ENCODE measurements at regions of chr18 and their contacts with region 1.

Region 1: DNA sequence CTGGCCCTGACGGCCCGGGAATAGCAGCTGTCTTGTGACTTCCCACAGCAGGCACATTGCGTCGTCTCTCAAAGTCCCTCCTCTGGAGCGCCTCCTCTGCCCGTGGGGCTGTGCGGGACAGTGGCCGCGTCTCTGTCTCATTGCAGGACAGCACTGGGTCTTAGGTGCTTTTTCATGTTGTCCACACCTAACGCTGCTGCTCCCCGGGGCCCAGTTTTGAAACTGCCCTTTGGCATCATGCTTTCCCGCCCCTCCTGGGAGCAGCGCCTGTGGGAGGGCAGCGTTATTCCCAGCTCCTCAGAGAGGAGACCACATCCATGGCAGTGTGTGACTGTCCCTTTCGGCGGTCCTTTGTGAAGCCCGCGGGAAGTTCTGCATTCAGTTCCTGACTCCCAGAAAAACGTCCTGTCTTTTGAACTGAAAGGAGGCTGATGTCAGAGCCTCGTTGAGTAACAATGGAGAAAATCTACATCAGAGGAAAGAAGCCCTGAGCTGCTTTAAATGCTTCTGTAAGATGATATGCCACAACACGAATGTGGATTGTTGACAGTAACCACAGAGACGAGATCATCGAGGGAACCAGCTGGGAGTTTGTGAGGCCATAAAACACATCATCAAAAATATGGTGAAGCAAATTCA is 226.0 kb downstream of the FAM210A start:
- DNase-seq: peak in 1 of 2 donors; percentile 79
- H3K4me3 ChIP-seq: peak overlapping the region in 1 of 2 donors; percentile 48
- H3K27ac ChIP-seq: peak overlapping the region; percentile 90 to 91
- H3K4me1 ChIP-seq: peaks cover 8 to 45% of the 10 kb centered on the region in 2 donors
- H3K27me3 ChIP-seq: no peaks in the 10 kb centered on the region
- CTCF ChIP-seq: no peak

Region 2: DNA sequence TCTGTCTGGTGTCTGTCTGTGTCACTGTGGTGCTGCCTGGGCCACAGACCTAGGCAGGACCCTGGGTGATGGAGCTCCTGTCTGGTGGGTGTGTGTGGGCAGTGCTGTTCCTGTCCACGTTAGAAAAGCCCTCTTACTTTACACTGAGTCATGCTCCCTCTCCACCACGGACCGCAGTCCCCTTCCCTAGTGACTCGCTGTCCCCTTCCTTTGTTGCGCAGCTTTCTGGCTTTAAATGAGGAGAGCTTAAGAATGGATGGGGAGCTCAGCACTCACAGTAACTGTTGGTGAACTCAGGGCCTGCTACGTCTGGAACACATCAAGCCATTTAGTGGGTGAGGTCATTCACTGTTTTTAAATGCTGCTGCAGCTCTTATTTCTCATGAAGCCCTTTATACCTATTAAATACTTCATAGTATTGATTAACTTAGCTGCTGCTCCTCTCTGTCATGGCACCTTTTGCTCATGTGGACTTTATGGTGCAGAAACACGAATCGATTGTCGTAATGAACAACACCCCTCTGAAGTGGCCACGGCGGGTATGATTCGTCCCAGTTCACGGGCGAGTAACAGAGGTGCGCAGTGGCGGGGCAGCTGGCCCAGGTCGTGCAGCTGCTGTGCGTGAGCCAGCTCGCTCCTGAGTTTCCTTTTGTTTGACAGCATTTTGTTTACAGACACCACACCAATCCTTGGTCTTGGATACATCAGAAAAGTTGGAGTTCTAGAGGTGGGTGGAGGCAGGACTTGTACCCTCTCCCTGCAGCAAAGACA is 181.4 kb before region 1 on chr18:
- intact Hi-C with region 1: loop called (anchors 5 kb)
- DNase-seq: no peak
- H3K4me3 ChIP-seq: peak overlapping the region in 1 of 2 donors; percentile 1
- H3K27ac ChIP-seq: peak overlapping the region; percentile 83 to 85
- H3K4me1 ChIP-seq: peaks cover 0 to 29% of the 10 kb centered on the region in 2 donors
- H3K27me3 ChIP-seq: no peaks in the 10 kb centered on the region
- CTCF ChIP-seq: no peak

Region 3: DNA sequence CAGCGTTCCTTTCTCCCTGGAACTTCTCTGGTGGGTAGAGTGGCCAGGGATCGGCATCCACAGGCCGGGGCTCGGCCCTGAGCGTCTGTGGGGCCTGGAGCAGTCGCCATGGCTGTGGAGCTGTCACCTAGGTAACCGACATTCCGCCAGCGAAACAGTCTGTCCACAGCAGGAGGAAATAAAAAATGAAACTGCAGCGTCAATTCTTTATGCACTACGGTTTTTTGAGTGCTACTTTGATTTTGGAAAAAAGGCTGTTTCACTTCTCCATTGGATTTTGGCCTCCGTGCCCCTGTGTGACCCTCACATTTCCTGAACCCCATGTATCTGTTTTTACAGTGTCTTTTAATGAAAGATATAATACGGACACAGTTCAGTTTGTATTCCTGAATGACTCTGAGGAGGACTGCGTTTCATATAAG is 118.4 kb before region 1 on chr18:
- intact Hi-C with region 1: loop called (anchors 2 kb)
- DNase-seq: peak; percentile 38 to 91
- H3K4me3 ChIP-seq: peak overlapping the region; percentile 35 to 55
- H3K27ac ChIP-seq: peak overlapping the region; percentile 95 to 96
- H3K4me1 ChIP-seq: peaks cover 15 to 52% of the 10 kb centered on the region in 2 donors
- H3K27me3 ChIP-seq: no peaks in the 10 kb centered on the region
- CTCF ChIP-seq: no peak

Region 4: DNA sequence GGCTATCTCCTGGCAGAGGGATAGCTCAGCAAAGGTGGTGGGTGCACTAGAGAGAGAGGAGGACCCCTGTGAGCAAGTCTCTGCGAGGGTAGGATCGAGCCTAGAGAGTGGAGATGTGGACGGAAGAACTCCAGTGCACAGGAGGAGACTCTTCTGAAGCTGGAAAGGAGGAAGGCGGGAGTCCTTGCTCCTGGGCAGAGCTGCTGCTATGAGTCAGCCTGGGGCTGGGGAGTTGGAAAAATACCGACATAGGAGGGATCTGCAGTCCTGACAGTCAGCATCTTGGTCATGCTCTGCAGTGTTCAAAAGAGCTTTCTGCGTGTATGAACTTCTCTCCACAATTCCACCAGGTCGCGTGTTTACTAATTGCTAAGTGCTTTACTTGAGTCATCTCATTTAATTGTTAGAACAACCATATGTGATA is 47.9 kb before region 1 on chr18:
- intact Hi-C with region 1: loop called (anchors 2 kb)
- DNase-seq: peak; percentile 62 to 92
- H3K4me3 ChIP-seq: peak overlapping the region in 1 of 2 donors; percentile 4
- H3K27ac ChIP-seq: peak overlapping the region; percentile 74 to 75
- H3K4me1 ChIP-seq: peaks cover 17 to 23% of the 10 kb centered on the region in 2 donors
- H3K27me3 ChIP-seq: no peaks in the 10 kb centered on the region
- CTCF ChIP-seq: no peak

Region 5: GRCh38 chr18:13558124-13558523 is 57.8 kb after region 1 on chr18:
- intact Hi-C with region 1: no loop called
- DNase-seq: no peak
- H3K4me3 ChIP-seq: no peak overlapping the region
- H3K27ac ChIP-seq: no peak overlapping the region
- H3K4me1 ChIP-seq: peaks cover 2 to 8% of the 10 kb centered on the region in 2 donors
- H3K27me3 ChIP-seq: no peaks in the 10 kb centered on the region
- CTCF ChIP-seq: peak; percentile 27 to 57 (median 32)

Measured in ascending aorta (tissue), 2 donors.